Activated CD8-positive, alpha-beta T cell treated with anti-CD3 and anti-CD28 coated beads for 36 hours (primary cell): ENCODE measurements at regions of chr5 and their contacts with region 1.

Region 1: DNA sequence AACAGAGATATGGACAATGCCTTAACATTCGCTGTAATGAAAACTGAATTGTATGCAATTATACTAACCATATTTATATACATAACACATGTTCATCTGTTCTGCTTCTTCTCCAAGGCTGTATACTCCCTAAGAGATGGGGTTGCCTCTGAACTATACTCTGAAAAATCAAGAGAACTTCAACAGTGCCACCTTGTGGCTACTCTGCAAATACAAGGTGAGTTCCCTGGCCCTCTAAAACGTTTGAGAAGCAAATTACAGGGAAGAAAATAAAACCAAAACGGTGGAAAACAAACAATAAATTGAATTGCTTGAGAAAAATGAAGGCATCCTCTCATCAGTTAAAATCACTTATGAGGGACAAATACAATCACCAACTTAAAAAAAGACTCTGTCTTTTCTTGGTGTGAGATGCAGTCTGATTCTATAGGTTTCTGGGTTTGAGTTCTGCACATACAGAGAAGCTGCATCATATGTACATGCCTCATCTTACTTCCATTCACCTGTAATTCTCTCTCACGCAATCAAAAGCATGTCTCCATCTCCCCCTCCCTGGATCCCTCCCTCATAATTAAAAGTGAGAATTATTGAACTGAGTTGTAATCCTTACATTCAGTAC is 98.6 kb downstream of the FBXW11 start:
- DNase-seq: peak; percentile 67
- ATAC-seq: peak; percentile 81
- H3K4me3 Mint-ChIP-seq: no peak overlapping the region
- H3K27ac Mint-ChIP-seq: peak overlapping the region; percentile 79
- H3K4me1 Mint-ChIP-seq: peaks cover 63% of the 10 kb centered on the region
- H3K27me3 Mint-ChIP-seq: no peaks in the 10 kb centered on the region
- CTCF ChIP-seq: peak; percentile 88

Region 2: DNA sequence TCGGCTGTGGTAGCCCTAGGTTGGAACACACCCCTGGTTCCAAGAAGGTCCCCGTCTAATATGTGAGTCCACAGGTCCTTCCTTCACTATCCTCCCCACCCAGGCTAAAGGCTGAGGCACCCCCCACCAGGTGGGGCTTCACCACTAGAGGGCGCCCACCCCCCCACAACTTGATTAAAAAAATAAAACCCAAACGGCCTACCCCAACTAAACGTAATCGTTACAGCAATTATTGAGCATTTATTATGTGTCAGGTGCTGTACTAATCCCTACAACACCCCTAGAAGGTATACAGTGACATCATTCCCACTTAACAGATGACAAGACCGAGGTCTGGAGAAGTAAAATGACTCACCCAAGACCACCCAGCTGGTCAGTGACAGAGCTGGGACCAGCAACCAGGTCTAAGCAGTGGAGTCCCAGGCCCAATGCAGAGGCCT is 423.4 kb before region 1 on chr5:
- CTCF ChIA-PET with region 1: interaction called, 3 read pairs
- POLR2A ChIA-PET with region 1: no interaction called
- intact Hi-C with region 1: loop called (anchors 5 kb)
- DNase-seq: peak; percentile 66
- ATAC-seq: peak; percentile 58
- H3K4me3 Mint-ChIP-seq: no peak overlapping the region
- H3K27ac Mint-ChIP-seq: no peak overlapping the region
- H3K4me1 Mint-ChIP-seq: peaks cover 4% of the 10 kb centered on the region
- H3K27me3 Mint-ChIP-seq: peaks cover 8% of the 10 kb centered on the region
- CTCF ChIP-seq: peak; percentile 76

Region 3: DNA sequence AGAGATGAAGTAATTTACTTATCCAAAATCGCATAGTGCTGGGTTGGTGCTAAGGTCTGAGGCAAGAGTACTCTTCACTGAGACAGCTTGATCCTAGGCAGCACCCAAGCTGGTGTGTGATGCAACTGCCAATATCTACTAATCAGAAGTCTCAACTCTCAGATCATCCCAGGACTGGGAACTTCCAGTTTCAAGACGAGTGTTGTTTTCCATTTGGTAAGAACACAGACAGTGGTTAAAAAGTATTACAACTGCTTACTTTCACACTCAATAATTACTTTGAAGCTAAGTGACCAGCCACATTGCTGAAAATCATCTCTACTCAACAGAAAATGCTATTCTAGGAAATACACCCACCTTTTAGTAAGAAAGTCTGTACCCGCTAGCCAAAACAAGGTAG is 53.3 kb after region 1 on chr5:
- CTCF ChIA-PET with region 1: interaction called, 15 read pairs
- POLR2A ChIA-PET with region 1: interaction called, 3 read pairs
- intact Hi-C with region 1: loop called (anchors 5 kb)
- DNase-seq: peak; percentile 81
- ATAC-seq: peak; percentile 67
- H3K4me3 Mint-ChIP-seq: peak overlapping the region; percentile 47
- H3K27ac Mint-ChIP-seq: peak overlapping the region; percentile 86
- H3K4me1 Mint-ChIP-seq: peaks cover 90% of the 10 kb centered on the region
- H3K27me3 Mint-ChIP-seq: no peaks in the 10 kb centered on the region
- CTCF ChIP-seq: no peak

Region 4: GRCh38 chr5:172035039-172035438 is 127.2 kb after region 1 on chr5:
- CTCF ChIA-PET with region 1: interaction called, 84 read pairs
- POLR2A ChIA-PET with region 1: no interaction called
- intact Hi-C with region 1: loop called (anchors 1 kb)
- DNase-seq: peak; percentile 30
- ATAC-seq: peak; percentile 82
- H3K4me3 Mint-ChIP-seq: no peak overlapping the region
- H3K27ac Mint-ChIP-seq: no peak overlapping the region
- H3K4me1 Mint-ChIP-seq: peaks cover 19% of the 10 kb centered on the region
- H3K27me3 Mint-ChIP-seq: no peaks in the 10 kb centered on the region
- CTCF ChIP-seq: no peak